Calu3 (cell line): ENCODE measurements at regions of chr7 and their contacts with region 1.

Region 1: DNA sequence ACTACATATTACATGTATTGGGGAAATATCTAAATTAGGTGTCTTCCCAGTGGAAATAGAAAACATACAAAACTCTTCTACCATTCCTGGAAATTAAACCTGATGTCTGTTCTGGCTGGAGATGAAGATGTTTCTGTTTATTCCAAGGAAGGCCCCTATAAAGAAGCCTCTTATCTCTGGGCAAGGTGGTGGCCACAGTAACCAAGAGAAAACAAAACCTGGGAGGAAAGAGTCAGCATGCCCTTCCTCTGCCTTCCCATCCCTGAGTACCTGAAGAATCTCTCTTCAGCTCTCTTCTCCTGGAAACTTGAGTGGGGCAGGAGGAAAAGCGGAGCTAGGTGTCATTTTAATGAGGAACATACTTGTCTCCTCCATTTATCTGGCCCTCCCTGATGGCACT is 5.0 kb downstream of the MACC1 start:
- DNase-seq: no peak
- H3K4me3 Mint-ChIP-seq: peak overlapping the region; percentile 73
- H3K27ac Mint-ChIP-seq: peak overlapping the region; percentile 95
- H3K4me1 Mint-ChIP-seq: peaks cover 46% of the 10 kb centered on the region
- H3K27me3 Mint-ChIP-seq: no peaks in the 10 kb centered on the region
- CTCF ChIP-seq: no peak

Region 2: GRCh38 chr7:19958309-19958896 is 253.8 kb before region 1 on chr7:
- CTCF ChIA-PET with region 1: no interaction called
- intact Hi-C with region 1: loop called (anchors 2 kb)
- DNase-seq: peak; percentile 80
- H3K4me3 Mint-ChIP-seq: no peak overlapping the region
- H3K27ac Mint-ChIP-seq: peak overlapping the region; percentile 97
- H3K4me1 Mint-ChIP-seq: peaks cover 33% of the 10 kb centered on the region
- H3K27me3 Mint-ChIP-seq: no peaks in the 10 kb centered on the region
- CTCF ChIP-seq: no peak

Region 3: GRCh38 chr7:20343205-20343604 is 131.0 kb after region 1 on chr7:
- CTCF ChIA-PET with region 1: no interaction called
- intact Hi-C with region 1: no loop called
- DNase-seq: no peak
- H3K4me3 Mint-ChIP-seq: peak overlapping the region; percentile 38
- H3K27ac Mint-ChIP-seq: no peak overlapping the region
- H3K4me1 Mint-ChIP-seq: peaks cover 23% of the 10 kb centered on the region
- H3K27me3 Mint-ChIP-seq: no peaks in the 10 kb centered on the region
- CTCF ChIP-seq: no peak

Region 4: DNA sequence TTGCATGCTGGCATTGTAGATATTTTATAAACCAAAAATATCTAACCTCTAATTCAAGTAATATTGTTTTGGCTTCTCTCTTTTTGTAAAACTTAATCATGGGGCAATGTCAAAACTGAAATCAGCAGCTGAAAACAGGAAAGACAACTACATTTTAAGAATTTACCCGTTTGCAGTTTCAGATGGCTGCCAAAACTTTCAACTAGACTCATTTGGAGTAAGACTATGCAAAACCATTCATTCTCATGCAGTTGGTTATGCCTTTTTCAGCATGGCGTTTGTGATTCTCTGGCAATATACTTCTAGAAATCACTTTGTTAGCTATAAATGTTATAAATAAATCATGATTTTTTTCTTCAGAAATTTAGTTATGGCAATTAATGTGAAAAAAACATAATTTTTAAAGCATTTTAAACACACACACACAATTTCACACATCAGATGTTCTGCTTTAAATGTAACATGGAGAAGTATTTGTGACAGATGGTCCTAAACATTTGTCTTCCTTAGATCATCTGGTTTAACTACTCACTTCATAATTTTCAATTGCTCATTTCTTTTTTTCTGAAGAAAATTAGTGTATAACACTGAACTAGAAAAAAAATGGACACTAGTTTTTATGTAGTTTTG is 234.9 kb after region 1 on chr7:
- CTCF ChIA-PET with region 1: no interaction called
- intact Hi-C with region 1: no loop called
- DNase-seq: no peak
- H3K4me3 Mint-ChIP-seq: no peak overlapping the region
- H3K27ac Mint-ChIP-seq: no peak overlapping the region
- H3K4me1 Mint-ChIP-seq: peaks cover 2% of the 10 kb centered on the region
- H3K27me3 Mint-ChIP-seq: no peaks in the 10 kb centered on the region
- CTCF ChIP-seq: no peak

Region 5: GRCh38 chr7:20647908-20648776 is 435.9 kb after region 1 on chr7:
- CTCF ChIA-PET with region 1: no interaction called
- intact Hi-C with region 1: no loop called
- DNase-seq: peak; percentile 77
- H3K4me3 Mint-ChIP-seq: no peak overlapping the region
- H3K27ac Mint-ChIP-seq: no peak overlapping the region
- H3K4me1 Mint-ChIP-seq: peaks cover 9% of the 10 kb centered on the region
- H3K27me3 Mint-ChIP-seq: no peaks in the 10 kb centered on the region
- CTCF ChIP-seq: peak; percentile 92